ENCODE measurements at regions of chr4 and their contacts with region 1.

Region 1: GRCh38 chr4:120238277-120238973 is 171.8 kb upstream of the MAD2L1 start:
- DNase-seq: no peak
- H3K4me3 ChIP-seq: no peak overlapping the region
- H3K27ac ChIP-seq: no peak overlapping the region
- H3K4me1 ChIP-seq: no peaks in the 10 kb centered on the region
- H3K27me3 ChIP-seq: peaks cover 2% of the 10 kb centered on the region
- CTCF ChIP-seq: no peak

Region 2: DNA sequence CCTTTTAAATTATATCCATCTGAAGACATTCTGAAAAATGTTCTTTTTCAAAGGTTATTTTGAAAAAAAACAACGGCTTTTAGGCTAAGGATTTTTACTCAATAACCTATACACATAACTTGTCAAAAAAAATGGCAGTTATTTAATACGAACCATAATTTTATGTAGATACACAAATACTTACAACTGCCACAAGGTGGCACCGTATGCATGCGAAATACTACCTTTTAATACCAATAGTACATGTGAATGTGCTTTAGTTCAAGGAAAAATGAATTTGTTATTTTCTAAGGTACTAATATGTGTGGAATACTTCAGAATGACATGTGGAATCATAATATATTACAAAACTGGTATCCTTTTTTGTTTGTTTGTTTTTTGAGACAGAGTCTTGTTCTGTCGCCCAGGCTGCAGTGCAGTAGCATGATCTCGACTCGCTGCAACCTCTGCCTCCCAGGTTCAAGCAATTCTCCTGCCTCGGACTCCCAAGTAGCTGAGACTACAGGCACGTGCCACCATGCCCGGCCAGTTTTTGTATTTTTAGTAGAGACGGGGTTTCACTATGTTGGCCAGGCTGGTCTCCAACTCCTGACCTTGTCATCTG is 167.1 kb before region 1 on chr4:
- CTCF ChIA-PET with region 1: no interaction called
- dilution Hi-C with region 1: no loop called
- in situ Hi-C with region 1: no loop called
- intact Hi-C with region 1: loop called (anchors 5 kb)
- DNase-seq: peak; percentile 38
- H3K4me3 ChIP-seq: no peak overlapping the region
- H3K27ac ChIP-seq: no peak overlapping the region
- H3K4me1 ChIP-seq: peaks cover 21% of the 10 kb centered on the region
- H3K27me3 ChIP-seq: no peaks in the 10 kb centered on the region
- CTCF ChIP-seq: peak; percentile 54 to 58

Measured in mammary epithelial cell (primary cell).